Head of caudate nucleus (tissue), 42 donors: ENCODE measurements at regions of chr17 and their contacts with region 1.

Region 1: DNA sequence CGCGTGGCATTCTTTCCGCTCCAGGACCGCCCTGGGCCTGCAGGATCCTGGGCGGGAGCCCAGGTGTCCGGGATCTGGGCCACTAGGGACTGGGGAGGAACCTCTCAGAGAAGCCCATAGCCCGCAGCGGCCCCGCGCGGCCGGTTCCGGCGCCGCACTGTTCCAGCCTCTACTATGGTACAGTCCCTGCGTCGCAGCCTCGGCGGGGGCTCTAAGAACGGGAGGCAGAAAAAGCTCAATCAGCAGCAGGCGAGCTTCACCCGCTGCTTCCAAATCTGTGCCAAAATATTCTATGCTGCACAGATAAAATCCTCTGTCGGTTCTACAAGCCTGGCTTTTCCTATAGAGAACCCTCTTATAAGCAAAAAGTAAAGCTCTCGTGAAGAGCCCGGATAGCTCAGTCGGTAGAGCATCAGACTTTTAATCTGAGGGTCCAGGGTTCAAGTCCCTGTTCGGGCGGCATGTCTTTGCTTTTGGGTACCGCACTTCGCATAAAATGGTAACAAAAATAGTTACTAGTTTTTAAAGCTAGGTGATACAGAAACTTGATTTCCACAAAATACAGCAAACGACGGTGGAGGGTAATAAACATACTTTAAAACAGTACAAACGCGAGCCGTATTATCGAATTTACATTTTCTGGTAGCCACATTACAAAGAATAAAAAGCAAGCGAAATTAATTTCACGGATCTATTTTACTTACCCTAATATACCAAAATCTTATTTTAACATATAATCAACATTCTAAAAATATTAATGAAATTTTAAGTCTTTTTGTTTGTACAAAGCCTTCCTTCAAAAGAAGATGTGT is 661 bp upstream of the ALOXE3 start:
- DNase-seq: peak; percentile 82 to 97 (median 92)

Region 2: DNA sequence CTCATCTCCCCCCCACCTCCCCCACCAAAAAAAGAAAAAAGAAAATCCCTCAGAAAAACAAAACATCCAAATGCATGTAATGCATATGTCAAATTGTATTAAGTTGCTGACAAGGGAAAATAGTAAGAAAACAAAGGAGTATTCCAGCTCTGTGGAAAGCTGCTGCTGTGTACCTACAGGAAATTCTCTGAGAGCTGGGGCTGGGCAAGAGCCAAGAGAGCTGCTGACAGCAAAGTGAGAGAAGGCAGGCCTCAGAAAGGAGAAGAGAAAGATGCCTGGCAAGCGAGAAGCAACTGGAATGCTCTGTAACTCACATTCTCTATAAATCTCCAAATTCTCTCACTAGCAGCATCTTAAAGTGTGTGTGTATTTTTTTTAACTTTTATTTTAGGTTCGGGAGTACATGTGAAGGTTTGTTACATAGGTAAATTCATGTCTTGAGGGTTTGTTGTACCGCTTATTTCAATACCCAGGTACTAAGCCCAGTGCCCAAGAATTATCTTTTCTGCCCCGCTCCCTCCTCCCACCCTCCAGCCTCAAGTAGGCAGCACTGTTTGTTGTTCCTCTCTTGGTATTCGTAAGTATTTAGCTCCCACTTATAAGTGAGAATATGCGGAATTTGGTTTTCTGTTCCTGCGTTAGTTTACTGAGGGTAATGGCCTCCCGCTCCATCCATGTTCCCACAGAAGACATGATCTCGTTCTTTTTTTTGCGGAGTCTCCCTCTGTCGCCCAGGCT is 162.6 kb before region 1 on chr17:
- intact Hi-C with region 1: no loop called
- DNase-seq: peak in 10 of 42 donors; percentile 9 to 30 (median 16)

Region 3: GRCh38 chr17:8156246-8156992 is 37.4 kb after region 1 on chr17:
- intact Hi-C with region 1: loop called (anchors 5 kb)
- DNase-seq: peak; percentile 98 to 100 (median 99)

Region 4: GRCh38 chr17:8189711-8190477 is 70.9 kb after region 1 on chr17 and contains the start of gene BORCS6:
- intact Hi-C with region 1: loop called (anchors 10 kb)
- DNase-seq: peak; percentile 98 to 100 (median 99)

Region 5: GRCh38 chr17:8222630-8223356 is 103.8 kb after region 1 on chr17:
- intact Hi-C with region 1: loop called (anchors 2 kb)
- DNase-seq: peak; percentile 90 to 97 (median 94)

Region 6: DNA sequence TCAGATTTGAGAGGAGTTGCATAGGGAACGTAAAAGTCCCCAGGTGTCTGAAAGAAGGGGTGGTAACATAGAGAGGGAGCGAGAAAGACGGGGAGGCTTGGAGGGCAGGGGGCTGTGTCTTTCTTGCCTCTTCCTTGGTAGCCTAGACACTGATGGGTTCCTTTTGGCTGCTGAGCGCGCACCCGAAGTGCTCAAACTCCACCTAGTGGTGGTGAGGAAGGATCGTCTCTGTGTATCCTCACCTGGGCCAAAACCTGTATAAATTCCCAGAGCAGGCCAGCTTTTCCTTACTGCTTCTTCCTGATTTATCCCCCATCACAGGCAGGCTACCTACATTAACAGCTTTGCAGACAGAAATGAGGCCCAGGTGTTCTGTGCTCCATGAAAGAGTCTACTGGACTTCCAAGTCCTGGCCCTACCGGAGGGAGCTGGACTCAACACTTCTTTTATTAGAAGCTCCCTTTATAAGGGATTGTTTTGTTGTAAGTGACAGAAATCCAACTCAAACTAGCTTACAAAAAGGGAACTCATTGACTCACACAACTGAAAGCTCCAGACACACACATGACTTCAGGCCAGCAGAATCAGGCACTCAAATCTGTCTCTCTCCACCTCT is 181.8 kb after region 1 on chr17:
- intact Hi-C with region 1: loop called (anchors 10 kb)
- DNase-seq: peak; percentile 44 to 88 (median 70)